GM12878 (cell line): ENCODE measurements at regions of chr15 and their contacts with region 1.

Region 1: GRCh38 chr15:98853161-98853560 is 154.4 kb downstream of the PGPEP1L start:
- DNase-seq: peak; percentile 50
- ATAC-seq: peak; percentile 75
- H3K4me3 ChIP-seq: peak overlapping the region; percentile 77
- H3K27ac ChIP-seq: no peak overlapping the region
- H3K4me1 ChIP-seq: peaks cover 14% of the 10 kb centered on the region
- H3K27me3 ChIP-seq: no peaks in the 10 kb centered on the region
- CTCF ChIP-seq: no peak
- EP300 ChIP-seq: no peak
- POLR2A ChIP-seq: no peak
- RAD21 ChIP-seq: no peak

Region 2: GRCh38 chr15:98647774-98648653 is 205.1 kb before region 1 on chr15 and contains the start of gene IGF1R:
- CTCF ChIA-PET with region 1: interaction called, 4 read pairs
- POLR2A ChIA-PET with region 1: no interaction called
- RAD21 ChIA-PET with region 1: no interaction called
- SMC1A ChIA-PET with region 1: interaction called, 3 read pairs
- in situ Hi-C with region 1: no loop called
- intact Hi-C with region 1: loop called (anchors 1 kb)
- DNase-seq: no peak
- ATAC-seq: peak; percentile 73
- H3K4me3 ChIP-seq: peak within 1 kb of the TSS; percentile 85
- H3K27ac ChIP-seq: no peak within 1 kb of the TSS
- H3K4me1 ChIP-seq: no peaks in the 10 kb centered on the region; the same call in 1 of the 2 replicates
- H3K27me3 ChIP-seq: peaks cover 14 to 29% of the 10 kb centered on the region in 2 experiments
- CTCF ChIP-seq: no peak
- EP300 ChIP-seq: no peak
- POLR2A ChIP-seq: peak; percentile 23; the same call in 1 of the 2 replicates
- RAD21 ChIP-seq: no peak
- polyA plus RNA-seq, gene IGF1R: 0.03 to 0.11 TPM